ENCODE measurements at regions of chr2 and their contacts with region 1.

Region 1: DNA sequence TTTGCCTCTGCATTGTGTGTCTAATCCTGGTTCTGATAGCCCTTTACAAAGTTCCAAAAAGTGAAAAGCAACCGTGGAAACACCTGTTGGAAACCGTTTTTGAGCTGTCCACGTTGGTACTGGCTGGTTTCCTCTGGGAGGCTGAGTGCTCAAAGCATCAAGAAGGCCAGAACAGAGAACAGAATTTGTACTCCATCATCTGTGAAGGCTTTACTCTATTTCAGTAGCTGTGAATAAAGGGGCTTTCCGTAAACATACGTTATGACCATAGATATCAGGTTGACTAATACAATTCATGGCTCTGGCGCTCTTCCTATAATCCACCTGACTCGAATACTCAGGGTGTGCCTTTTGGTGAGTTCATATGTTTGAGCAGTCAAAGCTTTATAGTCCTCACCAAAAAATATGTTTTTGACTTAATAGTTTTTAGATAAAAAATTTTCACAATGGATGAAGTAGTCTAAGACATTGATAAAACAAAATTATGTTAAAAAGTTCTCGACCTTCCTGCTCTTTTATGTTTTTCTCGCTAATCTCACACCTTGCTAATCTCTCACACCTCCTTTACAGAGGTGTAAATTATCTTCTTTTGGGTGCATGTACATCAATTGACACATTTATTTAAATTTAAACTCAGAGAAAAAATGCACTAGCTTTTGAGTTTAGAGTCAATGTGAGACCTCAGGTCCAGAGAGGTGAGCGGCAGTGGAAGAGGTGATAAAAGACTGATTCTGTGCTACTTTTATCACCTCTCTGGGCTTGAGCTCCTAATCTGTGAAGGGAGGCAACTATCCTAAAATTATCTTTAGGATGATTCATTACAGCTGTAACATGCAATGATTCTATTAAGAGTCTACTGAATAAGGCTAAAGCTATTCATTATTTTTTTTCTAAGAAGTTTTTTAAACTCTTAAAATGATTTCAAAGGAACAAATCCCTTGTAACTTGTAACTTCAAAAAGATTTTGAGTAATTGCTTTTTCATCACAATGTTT is 65.3 kb downstream of the CXCR4 start:
- DNase-seq: peak; percentile 53
- H3K4me3 Mint-ChIP-seq: peak overlapping the region; percentile 53
- H3K27ac Mint-ChIP-seq: peak overlapping the region; percentile 96
- H3K4me1 Mint-ChIP-seq: peaks cover 88% of the 10 kb centered on the region
- H3K27me3 Mint-ChIP-seq: no peaks in the 10 kb centered on the region

Region 2: DNA sequence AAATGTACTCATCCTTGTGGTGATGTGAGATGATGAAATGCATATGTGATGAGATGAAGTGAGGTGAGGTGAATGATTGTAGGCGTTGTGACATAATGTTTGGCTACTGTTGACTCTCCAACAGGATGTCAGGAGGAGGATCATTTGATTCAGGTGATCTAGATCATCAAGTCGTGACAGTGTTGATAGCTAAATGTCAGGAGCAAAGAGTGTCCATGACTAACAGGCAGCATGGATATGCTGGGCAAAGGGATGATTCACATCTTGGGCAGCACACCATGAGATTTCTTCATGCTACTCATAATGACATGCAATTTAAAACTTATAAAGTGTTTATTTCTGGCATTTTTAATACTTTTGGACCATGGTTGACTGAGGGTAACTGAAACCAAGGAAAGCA is 351.2 kb before region 1 on chr2:
- CTCF ChIA-PET with region 1: no interaction called
- intact Hi-C with region 1: no loop called
- DNase-seq: no peak
- H3K4me3 Mint-ChIP-seq: no peak overlapping the region
- H3K27ac Mint-ChIP-seq: no peak overlapping the region
- H3K4me1 Mint-ChIP-seq: no peaks in the 10 kb centered on the region
- H3K27me3 Mint-ChIP-seq: no peaks in the 10 kb centered on the region

Region 3: GRCh38 chr2:136008205-136008865 is 44.3 kb before region 1 on chr2:
- CTCF ChIA-PET with region 1: interaction called, 6 read pairs
- intact Hi-C with region 1: loop called (anchors 1 kb)
- DNase-seq: peak; percentile 73
- H3K4me3 Mint-ChIP-seq: no peak overlapping the region
- H3K27ac Mint-ChIP-seq: peak overlapping the region; percentile 15
- H3K4me1 Mint-ChIP-seq: peaks cover 38% of the 10 kb centered on the region
- H3K27me3 Mint-ChIP-seq: no peaks in the 10 kb centered on the region

Region 4: DNA sequence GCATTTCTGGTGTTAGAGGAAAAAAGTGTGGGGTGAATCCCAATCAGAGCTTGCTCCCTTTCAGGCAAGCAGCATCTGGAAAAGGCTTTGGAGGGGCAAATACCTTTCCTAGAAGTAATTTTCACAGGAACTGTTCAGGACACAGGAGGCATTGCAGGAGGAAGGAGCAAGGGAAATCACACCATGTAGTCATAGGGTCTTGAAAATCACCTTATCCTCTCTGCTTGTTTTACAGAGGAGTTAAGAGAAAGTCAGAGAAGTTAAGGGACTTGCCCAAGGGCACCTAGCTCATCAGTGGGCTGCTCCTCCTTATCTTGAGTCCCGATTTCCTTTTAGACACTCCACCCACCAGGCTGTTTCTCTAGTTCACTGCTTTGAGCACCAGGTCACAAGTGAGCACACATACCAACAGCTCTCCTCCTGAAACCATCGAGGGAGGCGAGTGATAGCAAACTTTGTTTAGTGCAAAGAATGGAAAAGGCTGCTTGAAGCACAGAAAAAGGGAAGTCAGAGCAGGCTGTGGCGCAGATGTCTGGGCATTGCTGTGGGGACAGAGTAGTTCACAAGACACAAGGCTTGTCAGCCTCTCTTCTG is 154.5 kb after region 1 on chr2:
- CTCF ChIA-PET with region 1: no interaction called
- intact Hi-C with region 1: loop called (anchors 2 kb)
- DNase-seq: peak; percentile 61
- H3K4me3 Mint-ChIP-seq: no peak overlapping the region
- H3K27ac Mint-ChIP-seq: peak overlapping the region; percentile 86
- H3K4me1 Mint-ChIP-seq: peaks cover 37% of the 10 kb centered on the region
- H3K27me3 Mint-ChIP-seq: no peaks in the 10 kb centered on the region

Region 5: DNA sequence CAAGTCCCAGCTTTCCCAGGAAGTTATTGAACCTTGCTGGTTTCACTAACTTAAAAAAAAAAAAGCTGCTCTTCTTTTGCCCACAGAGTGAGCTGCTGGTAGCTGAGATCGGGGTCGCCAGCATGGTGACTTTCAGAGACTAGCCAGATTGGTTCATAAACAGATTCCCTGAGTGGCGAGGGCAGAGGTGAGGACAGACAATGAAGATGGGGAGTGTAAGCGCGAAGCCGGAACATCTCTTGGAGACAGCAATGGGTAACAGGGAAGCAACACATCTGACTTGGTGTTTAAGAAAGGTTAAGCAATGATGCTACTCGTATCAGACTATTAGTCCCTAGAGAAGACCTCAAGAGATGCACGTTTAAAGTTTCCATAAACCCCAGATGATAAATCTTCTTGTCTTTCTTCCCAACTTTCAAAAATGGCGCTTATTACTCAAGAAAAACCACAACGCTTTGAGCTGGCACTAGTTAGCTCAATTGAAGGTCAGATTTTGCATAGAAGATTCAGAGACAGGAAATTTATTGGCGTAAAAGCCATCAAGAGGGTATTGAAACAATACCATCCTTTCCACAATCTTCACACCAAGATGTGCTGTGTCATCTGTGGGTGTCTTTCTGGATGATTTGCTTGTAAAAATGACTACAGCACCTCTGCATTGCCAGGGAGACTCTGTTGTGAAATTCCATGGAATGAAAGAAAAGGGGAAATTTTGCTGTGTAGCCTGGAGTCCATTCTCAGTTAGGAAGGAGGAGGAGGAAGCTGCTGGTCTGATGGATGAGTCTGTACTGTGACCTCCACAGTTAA is 258.3 kb after region 1 on chr2:
- CTCF ChIA-PET with region 1: no interaction called
- intact Hi-C with region 1: loop called (anchors 1 kb)
- DNase-seq: peak; percentile 60
- H3K4me3 Mint-ChIP-seq: no peak overlapping the region
- H3K27ac Mint-ChIP-seq: peak overlapping the region; percentile 82
- H3K4me1 Mint-ChIP-seq: peaks cover 18% of the 10 kb centered on the region
- H3K27me3 Mint-ChIP-seq: no peaks in the 10 kb centered on the region

Region 6: DNA sequence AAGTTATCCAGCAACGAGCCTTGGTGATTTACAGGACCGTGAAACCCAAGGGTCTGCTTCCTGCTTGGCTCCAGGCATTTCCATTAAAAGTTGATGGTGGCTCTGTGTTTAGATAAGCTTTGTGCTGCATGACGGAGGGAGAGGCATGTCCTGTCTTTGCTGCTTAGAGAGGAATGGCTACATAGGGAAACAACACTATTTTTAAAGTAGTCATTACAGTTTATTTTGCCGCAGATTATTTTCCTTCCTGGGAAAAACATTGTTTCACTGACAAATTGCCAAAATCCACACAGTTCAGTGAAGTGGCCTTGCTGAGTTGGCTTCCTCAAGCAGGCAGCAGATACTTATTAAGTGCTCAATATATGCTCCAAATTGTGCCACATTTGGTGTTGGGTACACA is 811.2 kb after region 1 on chr2:
- CTCF ChIA-PET with region 1: no interaction called
- intact Hi-C with region 1: no loop called
- DNase-seq: no peak
- H3K4me3 Mint-ChIP-seq: no peak overlapping the region
- H3K27ac Mint-ChIP-seq: no peak overlapping the region
- H3K4me1 Mint-ChIP-seq: no peaks in the 10 kb centered on the region
- H3K27me3 Mint-ChIP-seq: no peaks in the 10 kb centered on the region

Measured in activated naive CD4-positive, alpha-beta T cell treated with anti-CD3 and anti-CD28 coated beads for 36 hours (primary cell).